Activated CD4-positive, alpha-beta T cell treated with anti-CD3 and anti-CD28 coated beads, Interleukin-2, amount 10 ng/mL, durations not matched to agents 24 days and 14 days (primary cell): ENCODE measurements at regions of chr16 and their contacts with region 1.

Region 1: DNA sequence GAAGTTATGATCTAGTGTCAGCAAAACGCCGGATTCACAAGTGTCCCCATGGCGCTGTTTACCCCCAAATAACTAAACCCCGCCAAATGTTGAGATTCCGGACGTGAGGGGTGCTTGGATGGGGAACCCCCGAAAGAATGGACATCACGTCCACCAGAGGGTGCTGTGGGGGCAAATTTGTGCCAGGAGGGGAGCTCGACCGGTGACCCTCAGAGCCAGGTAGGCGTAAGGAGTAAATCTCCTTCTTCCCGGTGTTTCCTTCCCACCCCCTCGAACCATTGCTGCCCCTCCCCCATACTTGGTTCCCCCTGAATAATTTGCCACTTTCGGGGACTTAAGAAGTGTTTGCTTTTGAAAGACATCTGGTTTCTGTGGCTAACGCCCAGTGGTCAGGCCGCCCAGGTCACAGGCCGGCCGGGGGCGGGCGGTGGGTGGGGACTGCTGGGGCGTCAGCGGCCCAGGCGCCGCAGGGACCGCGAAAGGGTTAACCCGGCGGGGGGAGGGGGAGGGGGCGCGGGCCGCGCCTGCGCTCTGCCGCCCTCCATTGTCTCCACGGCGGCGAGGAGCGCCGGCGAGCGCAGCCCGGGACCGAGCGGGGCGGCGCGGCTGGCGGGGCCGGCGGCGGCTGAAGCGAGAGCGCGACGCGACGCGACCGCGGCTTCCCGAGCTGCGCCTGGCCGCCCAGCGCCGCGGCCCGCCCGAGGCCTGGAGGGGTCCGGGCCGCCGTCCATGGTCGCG is at the start of gene ZNRF1:
- DNase-seq: peak; percentile 93
- H3K4me3 Mint-ChIP-seq: peak within 1 kb of the TSS; percentile 96
- H3K27ac Mint-ChIP-seq: peak within 1 kb of the TSS; percentile 87
- H3K4me1 Mint-ChIP-seq: peaks cover 38% of the 10 kb centered on the region
- H3K27me3 Mint-ChIP-seq: peaks cover 11% of the 10 kb centered on the region
- total RNA-seq, gene ZNRF1: 41.4 and 46.8 TPM in 2 replicates

Region 2: GRCh38 chr16:74709441-74709877 is 289.2 kb before region 1 on chr16:
- intact Hi-C with region 1: loop called (anchors 5 kb)
- DNase-seq: peak; percentile 94
- H3K4me3 Mint-ChIP-seq: no peak overlapping the region
- H3K27ac Mint-ChIP-seq: no peak overlapping the region
- H3K4me1 Mint-ChIP-seq: peaks cover 8% of the 10 kb centered on the region
- H3K27me3 Mint-ChIP-seq: no peaks in the 10 kb centered on the region

Region 3: GRCh38 chr16:74973153-74973703 is 25.4 kb before region 1 on chr16:
- intact Hi-C with region 1: no loop called
- DNase-seq: no peak
- H3K4me3 Mint-ChIP-seq: no peak overlapping the region
- H3K27ac Mint-ChIP-seq: no peak overlapping the region
- H3K4me1 Mint-ChIP-seq: peaks cover 6% of the 10 kb centered on the region
- H3K27me3 Mint-ChIP-seq: no peaks in the 10 kb centered on the region

Region 4: DNA sequence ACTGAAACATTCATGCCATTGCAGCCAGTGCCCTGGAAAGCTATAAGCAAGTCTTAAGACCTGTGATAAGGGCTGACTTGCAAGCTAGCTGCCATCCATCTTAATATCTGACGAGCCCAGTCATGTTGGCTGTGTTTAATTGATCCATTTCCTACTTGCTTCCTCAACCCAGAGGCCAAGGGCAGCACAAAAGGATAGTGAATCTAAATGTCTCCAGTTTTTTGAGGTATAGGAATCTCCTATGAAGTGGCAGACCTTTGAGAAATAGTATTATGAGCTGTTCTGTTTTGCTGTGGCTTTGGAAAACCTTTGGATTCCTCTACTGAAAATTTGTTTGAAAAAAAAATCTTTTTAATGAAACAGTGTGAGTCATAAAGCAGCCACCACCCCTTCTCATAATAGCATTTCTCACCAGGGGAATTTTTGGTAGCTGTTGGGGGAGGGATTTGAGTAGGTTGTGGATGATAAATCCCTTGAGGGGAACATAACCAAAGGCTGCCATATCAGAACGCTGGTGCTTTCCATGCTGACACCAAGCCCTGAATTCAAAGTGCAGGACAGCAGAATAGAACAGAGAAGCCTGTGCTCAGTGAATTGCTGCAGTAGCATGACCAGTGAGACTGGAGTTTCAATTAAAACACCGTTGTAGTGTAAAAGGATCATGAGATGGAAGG is 13.1 kb after region 1 on chr16:
- intact Hi-C with region 1: loop called (anchors 1 kb)
- DNase-seq: peak; percentile 80
- H3K4me3 Mint-ChIP-seq: peak overlapping the region; percentile 67
- H3K27ac Mint-ChIP-seq: peak overlapping the region; percentile 93
- H3K4me1 Mint-ChIP-seq: peaks cover 37% of the 10 kb centered on the region
- H3K27me3 Mint-ChIP-seq: no peaks in the 10 kb centered on the region

Region 5: DNA sequence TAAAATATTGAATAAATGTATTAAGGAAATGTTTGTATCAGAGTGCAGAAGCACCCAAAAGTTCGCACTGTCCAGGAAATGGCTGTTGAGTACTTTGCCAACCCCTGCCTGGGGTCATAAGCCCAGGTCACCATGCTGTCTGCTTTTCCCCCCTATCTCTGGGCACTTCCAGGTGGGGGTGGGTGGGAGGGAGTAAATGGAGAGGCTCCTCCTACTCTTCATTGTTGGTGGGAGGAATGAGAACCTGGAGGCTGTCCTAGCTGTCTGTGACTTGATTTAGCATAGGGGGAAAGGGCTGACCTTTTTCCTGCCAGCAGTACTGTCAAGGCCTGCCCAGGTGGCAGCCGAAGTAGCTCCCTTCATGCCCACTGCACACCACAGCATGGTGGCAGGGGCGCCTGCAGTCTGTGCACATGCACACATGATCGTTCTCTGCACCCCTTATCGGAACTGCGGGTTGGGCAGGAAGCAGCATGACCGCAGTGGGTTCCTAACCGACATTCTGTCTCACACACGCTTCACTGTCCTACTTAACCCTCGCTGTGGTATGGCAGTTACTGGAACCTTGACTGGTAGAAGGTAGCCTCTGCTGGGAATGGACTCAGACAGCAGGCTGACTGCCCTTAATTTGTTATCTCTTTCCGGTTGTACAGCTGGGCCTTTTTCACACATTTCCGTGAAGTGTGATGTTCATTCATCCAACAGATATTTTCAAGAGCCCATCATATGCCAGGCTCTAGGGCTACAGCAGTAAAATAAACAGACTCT is 76.5 kb after region 1 on chr16:
- intact Hi-C with region 1: loop called (anchors 1 kb)
- DNase-seq: peak; percentile 95
- H3K4me3 Mint-ChIP-seq: peak overlapping the region; percentile 89
- H3K27ac Mint-ChIP-seq: peak overlapping the region; percentile 98
- H3K4me1 Mint-ChIP-seq: peaks cover 63% of the 10 kb centered on the region
- H3K27me3 Mint-ChIP-seq: no peaks in the 10 kb centered on the region

Region 6: GRCh38 chr16:75110637-75111513 is 112.2 kb after region 1 on chr16:
- intact Hi-C with region 1: loop called (anchors 1 kb)
- DNase-seq: peak; percentile 95
- H3K4me3 Mint-ChIP-seq: peak overlapping the region; percentile 84
- H3K27ac Mint-ChIP-seq: peak overlapping the region; percentile 95
- H3K4me1 Mint-ChIP-seq: peaks cover 57% of the 10 kb centered on the region
- H3K27me3 Mint-ChIP-seq: no peaks in the 10 kb centered on the region